ENCODE measurements at regions of chr11 and their contacts with region 1.

Region 1: GRCh38 chr11:119474682-119475596 is 52.0 kb upstream of the THY1 start:
- DNase-seq: peak; percentile 51 to 66 (median 62)
- ATAC-seq: peak; percentile 38 to 81 (median 77)
- H3K4me3 ChIP-seq: no peak overlapping the region
- H3K27ac ChIP-seq: no peak overlapping the region
- H3K4me1 ChIP-seq: peaks cover 0 to 7% (median 0%) of the 10 kb centered on the region in 12 donors
- H3K27me3 ChIP-seq: peaks cover 0 to 6% (median 0%) of the 10 kb centered on the region in 9 donors
- CTCF ChIP-seq: peak; percentile 73 to 92 (median 86)
- POLR2A ChIP-seq: no peak

Region 2: GRCh38 chr11:119144825-119145486 is 330.0 kb before region 1 on chr11:
- intact Hi-C with region 1: loop called in 1 of 10 experiments (anchors 5 kb)
- DNase-seq: peak in 4 of 5 donors; percentile 42 to 65 (median 47)
- ATAC-seq: peak; percentile 67 to 91 (median 81)
- H3K4me3 ChIP-seq: no peak overlapping the region
- H3K27ac ChIP-seq: no peak overlapping the region
- H3K4me1 ChIP-seq: peaks cover 0 to 23% (median 7%) of the 10 kb centered on the region in 12 donors
- H3K27me3 ChIP-seq: peaks cover 0 to 39% (median 0%) of the 10 kb centered on the region in 9 donors
- CTCF ChIP-seq: peak; percentile 46 to 72 (median 62)
- POLR2A ChIP-seq: no peak

Region 3: DNA sequence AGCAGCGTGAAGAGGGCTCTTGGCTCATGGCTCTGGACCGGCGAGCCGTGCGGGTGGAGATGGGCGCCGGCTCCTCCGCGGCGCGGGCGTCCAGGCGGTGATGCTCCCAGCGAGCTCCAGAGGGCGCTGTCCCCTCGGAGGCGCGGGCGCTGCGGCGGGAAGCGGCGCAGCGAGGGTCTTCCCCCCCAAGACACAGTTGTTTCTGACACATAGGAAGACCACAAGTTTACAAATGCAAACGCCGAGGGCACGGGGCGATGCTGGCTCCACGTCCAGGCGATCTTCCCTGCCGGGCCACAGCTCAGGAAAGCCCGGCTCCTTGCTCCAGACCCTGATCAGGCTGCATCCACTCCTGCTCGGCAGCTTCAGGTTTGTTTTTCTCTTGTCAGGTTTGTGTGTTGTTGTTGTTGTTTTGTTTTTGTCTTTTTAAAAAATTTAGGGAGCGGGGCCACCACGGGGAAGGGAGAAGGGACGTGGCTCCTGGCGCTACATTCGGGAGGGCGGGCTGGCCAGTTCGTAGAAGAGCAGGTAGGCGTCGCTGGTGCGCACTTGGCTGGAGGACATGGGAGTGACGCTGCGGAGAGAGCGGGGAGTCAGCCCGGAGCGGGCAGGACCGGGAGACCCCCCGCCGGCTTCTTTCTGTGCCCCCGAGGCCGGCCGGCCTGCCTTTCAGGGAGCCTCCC is 118.4 kb before region 1 on chr11:
- intact Hi-C with region 1: loop called (anchors 1 to 10 kb)
- DNase-seq: peak; percentile 84 to 91 (median 85)
- ATAC-seq: peak; percentile 35 to 71 (median 68)
- H3K4me3 ChIP-seq: peak overlapping the region in 11 of 12 donors; percentile 40 to 73 (median 60)
- H3K27ac ChIP-seq: peak overlapping the region; percentile 22 to 99 (median 74)
- H3K4me1 ChIP-seq: peaks cover 3 to 73% (median 39%) of the 10 kb centered on the region in 12 donors
- H3K27me3 ChIP-seq: peaks cover 0 to 11% (median 0%) of the 10 kb centered on the region in 9 donors
- CTCF ChIP-seq: peak; percentile 76 to 95 (median 90)
- POLR2A ChIP-seq: peak in 1 of 2 donors; percentile 25

Region 4: DNA sequence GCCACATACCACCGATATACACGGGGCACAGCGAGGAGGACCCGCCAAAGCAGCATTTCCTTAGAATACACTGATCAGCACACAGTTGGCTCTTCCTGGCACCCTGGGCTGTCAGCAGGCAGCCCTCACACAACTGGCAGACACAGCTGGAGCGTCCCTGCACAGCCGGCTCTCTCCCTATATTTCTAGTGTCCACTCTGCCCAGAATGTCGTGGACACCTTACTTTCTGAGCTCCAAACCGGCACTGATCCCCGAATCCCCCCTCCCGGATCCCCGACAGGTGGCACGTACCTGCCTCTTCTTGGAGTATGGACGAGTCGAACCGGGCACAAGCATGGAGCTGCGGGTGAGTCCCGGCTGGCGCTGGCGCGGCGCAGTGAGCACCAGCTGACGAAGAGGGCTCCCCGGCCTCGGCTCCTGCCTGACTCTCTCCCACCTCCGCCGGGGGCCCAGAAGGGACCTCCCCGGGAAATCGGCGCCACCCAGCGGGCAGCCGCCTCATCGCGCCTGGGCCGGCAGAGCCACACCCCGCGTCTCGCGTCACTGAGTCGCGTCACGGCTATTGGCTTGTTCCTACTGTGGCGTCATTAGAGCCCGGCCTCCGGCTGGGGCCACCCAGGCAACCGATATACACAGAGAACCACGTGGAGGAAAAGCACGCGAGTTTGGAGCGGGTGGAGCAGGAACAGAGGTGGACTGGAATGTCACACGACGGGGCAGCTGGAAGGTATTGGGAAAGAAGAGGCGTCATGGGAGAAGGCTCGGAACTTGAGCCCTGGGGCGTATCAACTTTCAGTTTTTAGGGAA is 93.6 kb before region 1 on chr11 and contains the start of gene USP2:
- intact Hi-C with region 1: loop called in 7 of 10 experiments (anchors 1 to 10 kb)
- DNase-seq: peak; percentile 95 to 98 (median 97)
- ATAC-seq: peak; percentile 91 to 94 (median 92)
- H3K4me3 ChIP-seq: peak within 1 kb of the TSS; percentile 9 to 65 (median 50)
- H3K27ac ChIP-seq: peak within 1 kb of the TSS in 11 of 12 donors; percentile 37 to 88 (median 69)
- H3K4me1 ChIP-seq: peaks cover 0 to 40% (median 20%) of the 10 kb centered on the region in 12 donors
- H3K27me3 ChIP-seq: peaks cover 0 to 7% (median 0%) of the 10 kb centered on the region in 9 donors
- CTCF ChIP-seq: peak; percentile 77 to 99 (median 92)
- POLR2A ChIP-seq: peak in 1 of 2 donors; percentile 64
- total RNA-seq, gene USP2: 53.7 to 138 (median 108) TPM

Region 5: GRCh38 chr11:119389611-119390254 is 85.2 kb before region 1 on chr11:
- intact Hi-C with region 1: loop called in 7 of 10 experiments (anchors 1 to 10 kb)
- DNase-seq: no peak
- ATAC-seq: no peak
- H3K4me3 ChIP-seq: no peak overlapping the region
- H3K27ac ChIP-seq: no peak overlapping the region
- H3K4me1 ChIP-seq: no peaks in the 10 kb centered on the region
- H3K27me3 ChIP-seq: no peaks in the 10 kb centered on the region
- CTCF ChIP-seq: peak in 3 of 12 donors; percentile 21 to 33 (median 23)
- POLR2A ChIP-seq: no peak

Region 6: DNA sequence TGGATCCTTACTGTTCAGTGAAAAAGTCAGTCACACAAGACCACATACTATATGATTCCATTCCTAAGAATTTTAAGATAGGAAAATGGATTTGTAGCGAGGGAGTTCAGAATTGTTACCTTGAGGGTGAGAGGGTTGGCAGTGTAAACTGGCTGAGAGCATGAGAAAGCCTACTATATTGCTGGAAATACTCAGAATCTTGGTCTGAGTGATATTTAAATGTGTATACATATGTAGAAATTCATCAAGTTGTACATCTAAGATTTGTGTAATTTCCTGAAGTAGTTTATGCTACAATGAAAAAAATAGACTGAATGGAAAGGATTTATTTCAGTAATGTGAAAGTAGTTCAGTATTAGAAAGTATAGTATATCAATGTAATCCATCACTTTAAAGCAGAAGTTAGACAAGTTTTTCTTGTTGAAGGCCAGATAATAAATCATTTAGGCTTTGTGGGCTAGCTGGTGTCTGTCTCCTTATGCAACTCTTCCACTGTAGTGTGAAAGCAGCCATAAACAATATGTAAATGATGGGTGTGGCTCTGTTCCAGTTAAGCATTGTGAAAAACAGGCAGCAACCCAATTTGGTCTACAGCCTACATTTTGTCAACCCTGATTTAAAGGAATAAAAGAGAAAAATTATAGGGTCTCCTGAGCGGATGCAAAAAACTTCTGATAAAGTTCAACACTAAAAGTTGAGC is 75.3 kb after region 1 on chr11:
- intact Hi-C with region 1: no loop called
- DNase-seq: no peak
- ATAC-seq: no peak
- H3K4me3 ChIP-seq: no peak overlapping the region
- H3K27ac ChIP-seq: no peak overlapping the region
- H3K4me1 ChIP-seq: no peaks in the 10 kb centered on the region
- H3K27me3 ChIP-seq: peaks cover 0 to 3% (median 0%) of the 10 kb centered on the region in 9 donors
- CTCF ChIP-seq: no peak
- POLR2A ChIP-seq: no peak